Naive thymus-derived CD4-positive, alpha-beta T cell (primary cell): ENCODE measurements at regions of chr11 and their contacts with region 1.

Region 1: GRCh38 chr11:12110201-12110713 is at the start of gene MICAL2:
- DNase-seq: peak; percentile 66 to 94 (median 76)
- ATAC-seq: peak; percentile 99
- H3K4me3 ChIP-seq: peak within 1 kb of the TSS; percentile 58
- H3K4me3 Mint-ChIP-seq: peak within 1 kb of the TSS; percentile 72 to 92 (median 80)
- H3K27ac ChIP-seq: peak within 1 kb of the TSS; percentile 46
- H3K27ac Mint-ChIP-seq: peak within 1 kb of the TSS in 8 of 9 donors; percentile 15 to 96 (median 46)
- H3K4me1 ChIP-seq: peaks cover 0 to 21% of the 10 kb centered on the region in 2 donors
- H3K4me1 Mint-ChIP-seq: peaks cover 5 to 69% (median 12%) of the 10 kb centered on the region in 7 donors
- H3K27me3 ChIP-seq: no peaks in the 10 kb centered on the region
- H3K27me3 Mint-ChIP-seq: no peaks in the 10 kb centered on the region
- total RNA-seq, gene MICAL2: 5.8 to 112 (median 13.4) TPM

Region 2: DNA sequence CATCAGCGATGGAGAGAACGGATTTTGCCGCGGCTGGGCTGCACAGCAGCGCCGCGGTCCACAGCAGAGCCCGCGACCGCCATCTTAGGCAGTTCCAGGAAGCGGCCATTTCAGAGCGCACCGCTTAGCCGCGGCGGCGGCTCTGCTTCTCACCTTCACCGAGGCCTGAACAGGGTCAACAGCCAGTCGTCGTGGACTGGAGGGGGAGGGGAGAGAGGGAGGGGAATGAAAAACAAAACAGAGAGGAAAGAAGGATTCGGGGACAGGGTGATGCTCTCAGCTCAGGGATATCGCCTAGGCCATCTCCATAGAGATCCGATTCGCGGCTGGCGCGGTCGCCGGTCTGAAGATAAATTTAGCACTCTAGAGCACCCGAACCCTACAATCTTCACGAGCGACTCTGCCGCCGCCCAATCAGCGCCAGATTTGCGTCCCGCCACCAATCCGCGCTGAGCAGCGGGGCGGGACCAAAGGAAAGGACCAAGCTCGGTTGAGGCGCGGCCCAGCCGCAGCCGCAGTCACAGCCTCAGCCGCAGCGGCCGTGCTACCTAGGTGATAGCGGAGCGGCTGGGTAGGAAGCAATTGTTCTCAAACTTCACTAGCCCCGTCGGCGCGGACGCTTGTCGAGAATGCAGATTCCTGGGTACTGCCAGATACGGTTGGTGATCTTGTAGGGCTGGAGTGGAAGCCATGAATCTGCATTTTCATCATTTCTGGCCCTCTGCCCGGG is 1252.4 kb before region 1 on chr11 and contains the start of gene ZBED5:
- CTCF ChIA-PET with region 1: no interaction called
- POLR2A ChIA-PET with region 1: no interaction called
- intact Hi-C with region 1: loop called in 1 of 2 experiments (anchors 5 kb)
- DNase-seq: peak; percentile 93 to 97 (median 96)
- ATAC-seq: peak; percentile 94
- H3K4me3 ChIP-seq: peak within 1 kb of the TSS; percentile 91
- H3K4me3 Mint-ChIP-seq: peak within 1 kb of the TSS; percentile 94 to 100 (median 99)
- H3K27ac ChIP-seq: peak within 1 kb of the TSS; percentile 91
- H3K27ac Mint-ChIP-seq: peak within 1 kb of the TSS; percentile 98 to 100 (median 100)
- H3K4me1 ChIP-seq: peaks cover 5 to 9% of the 10 kb centered on the region in 2 donors
- H3K4me1 Mint-ChIP-seq: peaks cover 20 to 73% (median 60%) of the 10 kb centered on the region in 7 donors
- H3K27me3 ChIP-seq: no peaks in the 10 kb centered on the region
- H3K27me3 Mint-ChIP-seq: peaks cover 0 to 2% (median 0%) of the 10 kb centered on the region in 5 donors
- total RNA-seq, gene ZBED5: 56.7 to 146 (median 94.0) TPM

Region 3: GRCh38 chr11:11451501-11452005 is 658.7 kb before region 1 on chr11:
- CTCF ChIA-PET with region 1: no interaction called
- POLR2A ChIA-PET with region 1: no interaction called
- intact Hi-C with region 1: no loop called
- DNase-seq: no peak
- ATAC-seq: no peak
- H3K4me3 ChIP-seq: no peak overlapping the region
- H3K4me3 Mint-ChIP-seq: no peak overlapping the region
- H3K27ac ChIP-seq: no peak overlapping the region
- H3K27ac Mint-ChIP-seq: no peak overlapping the region
- H3K4me1 ChIP-seq: no peaks in the 10 kb centered on the region
- H3K4me1 Mint-ChIP-seq: peaks cover 0 to 4% (median 0%) of the 10 kb centered on the region in 7 donors
- H3K27me3 ChIP-seq: no peaks in the 10 kb centered on the region
- H3K27me3 Mint-ChIP-seq: peaks cover 0 to 15% (median 0%) of the 10 kb centered on the region in 5 donors

Region 4: GRCh38 chr11:11998091-11998781 is 112.0 kb before region 1 on chr11:
- CTCF ChIA-PET with region 1: no interaction called
- POLR2A ChIA-PET with region 1: no interaction called
- intact Hi-C with region 1: no loop called
- DNase-seq: no peak
- ATAC-seq: no peak
- H3K4me3 ChIP-seq: no peak overlapping the region
- H3K4me3 Mint-ChIP-seq: peak overlapping the region in 8 of 10 donors; percentile 25 to 71 (median 56)
- H3K27ac ChIP-seq: no peak overlapping the region
- H3K27ac Mint-ChIP-seq: no peak overlapping the region
- H3K4me1 ChIP-seq: no peaks in the 10 kb centered on the region
- H3K4me1 Mint-ChIP-seq: peaks cover 0 to 17% (median 4%) of the 10 kb centered on the region in 7 donors
- H3K27me3 ChIP-seq: no peaks in the 10 kb centered on the region
- H3K27me3 Mint-ChIP-seq: peaks cover 28 to 51% (median 33%) of the 10 kb centered on the region in 5 donors

Region 5: DNA sequence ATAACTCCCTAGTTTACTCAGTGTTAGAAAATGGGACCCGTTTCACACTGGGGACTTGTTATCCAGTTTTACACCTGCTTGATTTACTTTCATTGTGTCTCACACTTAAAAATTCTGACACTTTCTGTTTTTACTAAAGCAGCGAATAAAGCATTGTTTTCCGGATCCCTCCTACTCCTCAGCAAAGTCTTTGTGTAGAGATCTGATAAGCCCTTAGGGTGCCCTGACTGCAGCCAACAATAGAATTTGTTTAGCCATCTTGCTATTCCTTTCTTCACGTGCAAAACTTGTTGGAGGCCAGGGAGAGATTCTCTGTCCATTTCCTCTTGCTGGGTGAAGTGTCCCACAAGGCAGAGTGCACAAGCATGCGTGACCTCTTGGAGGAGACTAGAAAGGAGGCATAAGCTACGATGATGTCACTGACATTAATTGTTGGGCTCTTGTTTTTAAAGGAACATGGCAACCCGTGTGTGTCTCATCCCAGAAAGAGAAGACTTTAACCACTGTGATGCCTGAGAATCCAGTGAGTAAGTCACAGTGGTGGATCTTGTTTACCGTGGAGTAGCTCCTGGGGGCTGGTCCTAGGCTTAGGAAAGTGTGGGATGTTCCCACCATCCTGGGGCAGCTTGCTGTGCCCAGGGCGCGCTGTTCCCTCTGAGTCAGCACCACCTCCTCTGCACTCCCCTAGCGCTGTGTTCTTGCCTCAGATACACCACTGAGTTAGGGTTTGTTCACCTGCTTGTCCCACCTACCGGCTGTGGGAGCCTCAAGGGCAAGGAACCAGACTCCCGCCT is 27.9 kb after region 1 on chr11:
- CTCF ChIA-PET with region 1: no interaction called
- POLR2A ChIA-PET with region 1: no interaction called
- intact Hi-C with region 1: loop called (anchors 2 kb)
- DNase-seq: no peak
- ATAC-seq: no peak
- H3K4me3 ChIP-seq: no peak overlapping the region
- H3K4me3 Mint-ChIP-seq: peak overlapping the region in 2 of 10 donors; percentile 11 to 42
- H3K27ac ChIP-seq: no peak overlapping the region
- H3K27ac Mint-ChIP-seq: peak overlapping the region in 3 of 9 donors; percentile 36 to 82 (median 63)
- H3K4me1 ChIP-seq: peaks cover 2 to 38% of the 10 kb centered on the region in 2 donors
- H3K4me1 Mint-ChIP-seq: peaks cover 40 to 67% (median 58%) of the 10 kb centered on the region in 7 donors
- H3K27me3 ChIP-seq: no peaks in the 10 kb centered on the region
- H3K27me3 Mint-ChIP-seq: no peaks in the 10 kb centered on the region

Region 6: GRCh38 chr11:12167098-12168000 is 57.1 kb after region 1 on chr11:
- CTCF ChIA-PET with region 1: interaction called, 3 read pairs
- POLR2A ChIA-PET with region 1: no interaction called
- intact Hi-C with region 1: loop called in 1 of 2 experiments (anchors 5 kb)
- DNase-seq: no peak
- ATAC-seq: peak; percentile 52
- H3K4me3 ChIP-seq: no peak overlapping the region
- H3K4me3 Mint-ChIP-seq: peak overlapping the region in 1 of 10 donors; percentile 26
- H3K27ac ChIP-seq: no peak overlapping the region
- H3K27ac Mint-ChIP-seq: peak overlapping the region in 2 of 9 donors; percentile 19 to 89
- H3K4me1 ChIP-seq: no peaks in the 10 kb centered on the region
- H3K4me1 Mint-ChIP-seq: peaks cover 0 to 51% (median 0%) of the 10 kb centered on the region in 7 donors
- H3K27me3 ChIP-seq: no peaks in the 10 kb centered on the region
- H3K27me3 Mint-ChIP-seq: no peaks in the 10 kb centered on the region

Region 7: DNA sequence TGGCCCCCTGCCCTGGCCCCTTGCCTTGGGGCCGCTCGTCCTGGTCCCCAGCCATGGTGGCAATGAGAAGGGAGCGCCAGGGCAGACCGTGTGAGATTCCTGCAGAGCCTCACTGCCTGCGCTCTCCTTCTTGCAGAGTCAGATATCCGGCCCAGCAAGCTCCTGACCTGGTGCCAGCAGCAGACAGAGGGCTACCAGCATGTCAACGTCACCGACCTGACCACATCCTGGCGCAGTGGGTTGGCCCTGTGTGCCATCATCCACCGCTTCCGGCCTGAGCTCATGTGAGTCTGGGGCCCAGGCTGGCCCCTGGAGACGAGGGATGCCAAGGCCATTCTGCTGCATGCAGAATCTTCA is 114.3 kb after region 1 on chr11:
- CTCF ChIA-PET with region 1: no interaction called
- POLR2A ChIA-PET with region 1: no interaction called
- intact Hi-C with region 1: loop called (anchors 1 kb)
- DNase-seq: peak; percentile 55 to 86 (median 81)
- ATAC-seq: peak; percentile 97
- H3K4me3 ChIP-seq: peak overlapping the region; percentile 52
- H3K4me3 Mint-ChIP-seq: peak overlapping the region; percentile 67 to 91 (median 75)
- H3K27ac ChIP-seq: peak overlapping the region; percentile 54
- H3K27ac Mint-ChIP-seq: peak overlapping the region; percentile 87 to 97 (median 91)
- H3K4me1 ChIP-seq: peaks cover 36 to 41% of the 10 kb centered on the region in 2 donors
- H3K4me1 Mint-ChIP-seq: peaks cover 33 to 51% (median 47%) of the 10 kb centered on the region in 7 donors
- H3K27me3 ChIP-seq: no peaks in the 10 kb centered on the region
- H3K27me3 Mint-ChIP-seq: no peaks in the 10 kb centered on the region

Region 8: GRCh38 chr11:12673924-12674570 is 563.8 kb after region 1 on chr11 and contains the start of gene TEAD1:
- CTCF ChIA-PET with region 1: no interaction called
- POLR2A ChIA-PET with region 1: no interaction called
- intact Hi-C with region 1: loop called in 1 of 2 experiments (anchors 5 kb)
- DNase-seq: peak; percentile 74 to 97 (median 81)
- ATAC-seq: peak; percentile 89
- H3K4me3 ChIP-seq: peak within 1 kb of the TSS; percentile 70
- H3K4me3 Mint-ChIP-seq: peak within 1 kb of the TSS; percentile 80 to 91 (median 85)
- H3K27ac ChIP-seq: no peak within 1 kb of the TSS
- H3K27ac Mint-ChIP-seq: peak within 1 kb of the TSS in 4 of 9 donors; percentile 29 to 77 (median 55)
- H3K4me1 ChIP-seq: peaks cover 5 to 6% of the 10 kb centered on the region in 2 donors
- H3K4me1 Mint-ChIP-seq: peaks cover 6 to 24% (median 9%) of the 10 kb centered on the region in 7 donors
- H3K27me3 ChIP-seq: peaks cover 5 to 50% of the 10 kb centered on the region in 2 donors
- H3K27me3 Mint-ChIP-seq: peaks cover 70 to 80% (median 75%) of the 10 kb centered on the region in 5 donors
- total RNA-seq, gene TEAD1: 0.07 to 0.22 TPM in 2 of 5 experiments, not detected in the others